GM12878 (cell line): ENCODE measurements at regions of chr2 and their contacts with region 1.

Region 1: DNA sequence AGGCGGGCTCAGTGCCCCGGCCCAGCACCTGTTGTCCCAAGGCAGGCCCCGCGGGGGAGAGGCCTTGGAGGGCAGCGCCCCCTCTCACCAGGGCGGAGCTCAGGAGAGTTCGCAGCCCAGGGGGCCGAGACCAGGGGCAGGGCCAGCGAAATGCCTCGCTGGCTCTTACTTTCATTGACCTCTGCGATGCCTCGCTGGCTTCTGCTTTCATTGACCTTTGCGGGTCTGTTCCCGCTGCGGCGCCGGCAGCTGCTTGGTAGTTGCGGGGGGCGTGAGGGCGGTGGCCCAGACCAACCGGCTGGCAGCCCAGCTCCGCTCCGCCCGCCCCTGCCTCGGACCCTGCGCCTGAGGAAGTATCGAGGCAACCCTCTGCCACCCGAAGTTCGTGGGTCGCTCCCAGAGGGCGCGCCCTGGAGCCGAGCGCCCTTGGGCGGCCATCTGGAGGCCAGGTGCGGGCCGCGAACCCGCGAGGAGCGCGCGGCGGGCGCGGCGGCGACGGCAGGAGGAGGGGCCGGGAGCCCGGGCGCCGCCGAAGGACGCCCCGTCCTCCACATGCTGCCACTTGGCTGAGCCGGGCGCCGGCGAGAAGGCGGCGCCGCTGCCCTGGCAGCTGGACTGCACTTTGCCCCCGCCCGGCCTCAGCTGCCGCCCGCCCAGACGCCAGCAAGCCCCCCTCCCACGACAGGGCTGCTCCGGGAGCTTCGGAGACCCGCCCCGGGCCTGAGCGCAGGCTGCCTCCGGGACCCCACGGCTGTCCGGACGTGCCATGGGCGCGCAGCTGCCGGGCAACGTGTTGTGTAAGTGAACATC is 118.0 kb upstream of the MSTN start:
- DNase-seq: no peak
- ATAC-seq: peak; percentile 86
- H3K4me3 ChIP-seq: peak overlapping the region; percentile 73
- H3K27ac ChIP-seq: peak overlapping the region; percentile 11; the same call in 1 of the 2 replicates
- H3K4me1 ChIP-seq: peaks cover 16% of the 10 kb centered on the region
- H3K27me3 ChIP-seq: no peaks in the 10 kb centered on the region
- CTCF ChIP-seq: peak in 2 of 3 experiments; percentile 65 to 67; a peak in 5 of 6 replicates
- EP300 ChIP-seq: no peak
- POLR2A ChIP-seq: peak; percentile 60
- RAD21 ChIP-seq: no peak

Region 2: DNA sequence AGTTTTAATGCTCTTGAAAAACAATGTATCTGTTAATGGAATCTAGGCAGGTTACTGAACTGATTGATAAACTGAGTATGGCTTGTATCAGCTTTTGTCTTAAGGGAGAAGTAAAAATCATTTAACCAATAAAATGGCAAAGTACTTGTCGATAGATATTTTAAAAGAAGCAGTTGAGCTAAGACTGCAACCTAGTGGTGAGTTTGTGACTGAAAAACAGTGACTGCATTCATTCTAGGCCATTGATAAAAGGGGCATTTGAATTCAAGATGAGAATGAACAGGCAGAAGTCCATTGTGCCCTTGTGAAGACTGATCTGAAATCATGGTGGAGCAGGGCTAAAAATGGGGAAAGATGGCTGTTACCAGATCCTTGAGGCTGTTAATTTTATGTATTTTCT is 58.5 kb before region 1 on chr2:
- CTCF ChIA-PET with region 1: interaction called, 5 read pairs
- POLR2A ChIA-PET with region 1: interaction called, 3 read pairs
- RAD21 ChIA-PET with region 1: interaction called, 6 read pairs
- SMC1A ChIA-PET with region 1: interaction called, 17 read pairs
- in situ Hi-C with region 1: no loop called
- intact Hi-C with region 1: loop called (anchors 2 kb)
- DNase-seq: peak; percentile 9
- ATAC-seq: peak; percentile 88
- H3K4me3 ChIP-seq: no peak overlapping the region
- H3K27ac ChIP-seq: no peak overlapping the region
- H3K4me1 ChIP-seq: no peaks in the 10 kb centered on the region
- H3K27me3 ChIP-seq: no peaks in the 10 kb centered on the region
- CTCF ChIP-seq: peak; percentile 33 to 56 (median 37); a peak in 5 of 6 replicates
- EP300 ChIP-seq: no peak
- POLR2A ChIP-seq: no peak
- RAD21 ChIP-seq: peak; percentile 46

Region 3: GRCh38 chr2:190159453-190159852 is 21.1 kb before region 1 on chr2:
- CTCF ChIA-PET with region 1: interaction called, 21 read pairs
- POLR2A ChIA-PET with region 1: interaction called, 4 read pairs
- RAD21 ChIA-PET with region 1: interaction called, 7 read pairs
- SMC1A ChIA-PET with region 1: interaction called, 32 read pairs
- in situ Hi-C with region 1: no loop called
- intact Hi-C with region 1: loop called (anchors 2 kb)
- DNase-seq: no peak
- ATAC-seq: no peak
- H3K4me3 ChIP-seq: no peak overlapping the region
- H3K27ac ChIP-seq: no peak overlapping the region
- H3K4me1 ChIP-seq: peaks cover 10% of the 10 kb centered on the region
- H3K27me3 ChIP-seq: no peaks in the 10 kb centered on the region
- CTCF ChIP-seq: no peak
- EP300 ChIP-seq: no peak
- POLR2A ChIP-seq: no peak
- RAD21 ChIP-seq: no peak

Region 4: DNA sequence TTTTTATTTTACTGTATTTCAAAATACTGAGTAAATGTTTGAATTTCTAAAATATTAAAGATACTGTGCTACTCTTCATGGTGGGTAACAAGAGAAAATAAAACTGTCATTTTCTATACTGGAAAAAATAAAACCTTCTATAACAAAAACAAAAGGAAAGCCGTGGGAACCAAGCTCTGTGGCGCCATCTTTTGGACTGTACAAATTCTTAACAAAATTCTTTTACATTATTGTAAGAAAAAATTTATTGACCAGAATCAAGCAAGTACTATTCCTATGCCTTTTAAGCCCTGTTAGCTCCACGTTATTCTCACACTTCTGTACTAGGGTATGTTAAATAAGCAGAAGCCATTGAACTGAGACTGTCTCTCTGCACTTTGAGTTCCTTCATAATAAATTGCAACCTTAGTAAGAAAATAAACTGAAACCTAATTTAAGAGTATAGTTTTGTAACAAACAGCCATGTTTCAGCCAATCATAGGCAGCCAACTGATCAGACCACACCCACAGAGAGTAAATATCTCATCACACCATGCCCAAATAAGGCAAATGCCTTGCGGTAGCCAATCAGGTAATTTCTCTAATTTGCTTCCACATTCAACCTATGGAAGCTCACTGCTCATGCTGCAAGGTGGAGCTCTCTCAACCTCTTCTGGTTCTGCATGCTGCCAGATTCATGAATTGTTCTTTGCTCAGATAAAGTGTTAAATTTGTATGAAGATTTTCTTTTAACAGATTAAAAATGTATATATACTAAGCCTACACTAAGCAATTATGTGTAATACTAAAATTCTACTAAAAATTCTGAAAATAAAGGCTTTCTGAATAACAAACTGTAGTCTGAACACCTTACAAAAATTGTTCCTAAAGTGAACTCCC is 97.0 kb after region 1 on chr2:
- CTCF ChIA-PET with region 1: interaction called, 5 read pairs
- POLR2A ChIA-PET with region 1: interaction called, 3 read pairs
- RAD21 ChIA-PET with region 1: interaction called, 10 read pairs
- SMC1A ChIA-PET with region 1: interaction called, 6 read pairs
- in situ Hi-C with region 1: no loop called
- intact Hi-C with region 1: no loop called
- DNase-seq: no peak
- ATAC-seq: peak; percentile 89
- H3K4me3 ChIP-seq: no peak overlapping the region
- H3K27ac ChIP-seq: no peak overlapping the region
- H3K4me1 ChIP-seq: no peaks in the 10 kb centered on the region
- H3K27me3 ChIP-seq: no peaks in the 10 kb centered on the region
- CTCF ChIP-seq: peak in 2 of 3 experiments; percentile 12 to 39; a peak in 3 of 6 replicates
- EP300 ChIP-seq: no peak
- POLR2A ChIP-seq: no peak
- RAD21 ChIP-seq: peak; percentile 57

Region 5: DNA sequence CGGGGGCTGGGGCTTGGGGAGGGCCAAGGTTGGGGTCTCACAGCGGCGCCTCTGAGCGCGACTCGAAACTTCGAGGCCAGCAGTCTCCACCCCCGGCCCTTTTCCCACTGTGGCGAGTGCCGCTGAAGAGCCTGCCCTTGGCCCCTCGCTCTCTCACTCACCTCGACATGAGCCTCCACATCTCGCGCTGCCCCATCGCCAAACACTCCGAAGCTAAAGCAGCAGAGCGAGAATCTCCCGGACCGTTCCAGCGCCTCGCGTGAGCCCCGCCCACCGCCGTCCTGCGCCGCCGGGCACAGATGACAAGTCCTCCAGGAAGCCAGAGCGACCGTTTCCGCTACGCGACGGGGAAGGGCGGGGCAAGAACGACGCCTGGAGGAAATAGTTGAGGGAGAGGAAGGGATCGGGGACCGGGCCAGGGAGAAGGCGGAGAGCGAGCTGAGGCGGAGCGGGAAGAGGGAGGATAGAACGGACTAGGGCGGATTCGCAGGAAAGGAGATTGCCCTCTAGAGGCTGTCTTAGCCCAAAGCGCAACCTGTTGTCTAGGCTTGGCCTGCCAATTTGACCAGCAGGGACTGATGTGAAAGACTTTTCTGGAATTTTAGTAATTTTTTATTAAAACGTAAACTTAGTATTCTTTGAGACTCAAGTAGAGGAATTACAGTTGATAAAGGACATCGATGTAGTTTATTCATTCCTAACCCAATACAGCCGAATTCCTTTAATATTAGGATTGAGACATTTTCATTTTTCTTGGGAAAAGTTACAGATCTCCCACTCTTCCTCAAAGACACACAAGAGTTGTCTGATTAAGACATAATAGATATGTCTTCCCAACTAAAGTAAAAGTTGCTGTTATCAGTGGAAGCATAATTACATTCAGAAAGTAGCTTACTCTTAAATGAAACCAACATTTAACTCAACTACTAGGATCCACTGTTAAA is 139.3 kb after region 1 on chr2 and contains the start of gene HIBCH:
- CTCF ChIA-PET with region 1: interaction called, 15 read pairs
- POLR2A ChIA-PET with region 1: interaction called, 4 read pairs
- RAD21 ChIA-PET with region 1: no interaction called
- SMC1A ChIA-PET with region 1: interaction called, 3 read pairs
- in situ Hi-C with region 1: no loop called
- intact Hi-C with region 1: loop called (anchors 5 kb)
- DNase-seq: peak; percentile 81
- ATAC-seq: peak; percentile 94
- H3K4me3 ChIP-seq: peak within 1 kb of the TSS; percentile 77
- H3K27ac ChIP-seq: peak within 1 kb of the TSS; percentile 76
- H3K4me1 ChIP-seq: peaks cover 9% of the 10 kb centered on the region
- H3K27me3 ChIP-seq: no peaks in the 10 kb centered on the region
- CTCF ChIP-seq: peak; percentile 53 to 61 (median 58)
- EP300 ChIP-seq: no peak
- POLR2A ChIP-seq: peak; percentile 89
- RAD21 ChIP-seq: no peak
- polyA plus RNA-seq, gene HIBCH: 64.6 to 73.8 TPM

Region 6: GRCh38 chr2:190365499-190366204 is 185.1 kb after region 1 on chr2:
- CTCF ChIA-PET with region 1: no interaction called
- POLR2A ChIA-PET with region 1: no interaction called
- RAD21 ChIA-PET with region 1: interaction called, 3 read pairs
- SMC1A ChIA-PET with region 1: no interaction called
- in situ Hi-C with region 1: no loop called
- intact Hi-C with region 1: loop called (anchors 5 kb)
- DNase-seq: no peak
- ATAC-seq: no peak
- H3K4me3 ChIP-seq: no peak overlapping the region
- H3K27ac ChIP-seq: no peak overlapping the region
- H3K4me1 ChIP-seq: no peaks in the 10 kb centered on the region
- H3K27me3 ChIP-seq: no peaks in the 10 kb centered on the region
- CTCF ChIP-seq: no peak
- EP300 ChIP-seq: no peak
- POLR2A ChIP-seq: no peak
- RAD21 ChIP-seq: no peak